CD8-positive, alpha-beta T cell (primary cell): ENCODE measurements at regions of chr11 and their contacts with region 1.

Region 1: DNA sequence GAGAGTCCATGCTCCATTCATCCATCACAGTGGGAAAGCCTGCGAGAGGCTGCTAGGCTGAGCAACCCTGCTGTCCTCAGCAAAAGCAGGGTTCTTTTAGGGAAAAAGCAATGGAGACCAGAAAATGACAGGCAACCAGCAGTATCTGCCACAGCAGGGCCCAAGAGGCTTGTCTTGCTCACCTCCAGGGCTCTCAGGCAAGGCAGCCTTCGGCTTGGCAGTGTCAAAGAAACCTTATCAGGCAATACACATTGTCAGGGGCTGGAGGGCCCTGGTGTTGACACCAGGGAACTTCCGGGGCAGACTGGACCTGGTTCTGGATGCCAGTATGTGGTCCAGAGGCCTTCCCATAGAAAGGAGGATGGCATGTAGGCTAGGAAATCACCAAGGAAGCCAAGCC is 10.2 kb upstream of the TLCD5 start:
- DNase-seq: no peak
- ATAC-seq: no peak
- H3K4me3 ChIP-seq: no peak overlapping the region
- H3K4me3 Mint-ChIP-seq: no peak overlapping the region
- H3K27ac ChIP-seq: no peak overlapping the region
- H3K27ac Mint-ChIP-seq: no peak overlapping the region
- H3K4me1 ChIP-seq: no peaks in the 10 kb centered on the region
- H3K4me1 Mint-ChIP-seq: no peaks in the 10 kb centered on the region
- H3K27me3 ChIP-seq: no peaks in the 10 kb centered on the region
- H3K27me3 Mint-ChIP-seq: peaks cover 15% of the 10 kb centered on the region
- CTCF ChIP-seq: no peak

Region 2: DNA sequence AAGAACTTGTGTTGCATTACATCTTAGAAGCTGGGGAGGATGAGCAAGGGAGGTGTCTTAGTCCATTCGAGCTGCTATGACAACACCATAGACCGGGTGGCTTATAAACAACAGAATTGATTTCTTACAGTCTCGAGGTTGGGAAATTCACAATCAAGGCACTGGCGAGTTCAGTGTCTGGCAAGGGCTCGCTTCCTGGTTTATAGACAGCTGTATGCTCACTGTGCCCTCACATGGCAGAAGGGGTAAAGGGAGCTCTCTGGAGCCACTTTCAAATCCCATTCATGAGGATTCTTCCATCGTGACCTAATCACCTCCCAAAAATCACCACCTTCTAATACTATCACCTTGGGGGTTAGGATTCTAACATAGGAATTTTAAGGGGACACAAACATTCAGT is 435.9 kb before region 1 on chr11:
- CTCF ChIA-PET with region 1: no interaction called
- POLR2A ChIA-PET with region 1: no interaction called
- intact Hi-C with region 1: no loop called
- DNase-seq: no peak
- ATAC-seq: no peak
- H3K4me3 ChIP-seq: no peak overlapping the region
- H3K4me3 Mint-ChIP-seq: no peak overlapping the region
- H3K27ac ChIP-seq: no peak overlapping the region
- H3K27ac Mint-ChIP-seq: no peak overlapping the region
- H3K4me1 ChIP-seq: no peaks in the 10 kb centered on the region
- H3K4me1 Mint-ChIP-seq: no peaks in the 10 kb centered on the region
- H3K27me3 ChIP-seq: no peaks in the 10 kb centered on the region
- H3K27me3 Mint-ChIP-seq: peaks cover 12% of the 10 kb centered on the region
- CTCF ChIP-seq: no peak

Region 3: DNA sequence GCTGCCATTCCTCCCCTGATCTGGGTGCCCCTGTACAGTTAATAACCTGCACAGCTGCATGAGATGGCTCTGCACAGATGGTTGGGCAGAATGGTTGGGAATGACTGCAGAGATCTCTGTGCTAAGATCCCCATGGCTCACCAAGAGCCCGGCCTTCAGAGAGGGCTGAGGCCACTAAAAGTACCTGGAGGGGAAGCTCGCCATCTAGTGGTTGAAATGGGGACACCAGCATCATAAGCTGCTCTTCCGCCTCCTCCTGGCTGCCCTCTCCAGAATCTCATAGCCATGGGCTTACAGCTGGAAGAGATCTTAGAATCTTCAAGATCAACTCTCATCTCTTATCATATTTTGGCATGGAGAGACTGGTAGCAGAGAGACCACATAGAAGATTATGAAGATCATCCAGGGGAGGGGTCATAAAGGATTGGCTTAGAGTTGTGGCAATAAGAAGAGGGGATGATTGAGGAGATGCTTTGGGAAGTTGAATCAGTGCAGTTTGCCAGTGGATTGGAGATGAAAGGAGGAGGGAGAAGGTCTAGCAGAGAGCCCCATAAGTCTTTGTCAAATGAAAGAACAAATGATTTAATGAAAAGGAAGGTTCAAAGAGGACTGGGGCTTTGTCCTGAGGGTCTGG is 11.7 kb before region 1 on chr11:
- CTCF ChIA-PET with region 1: interaction called, 15 read pairs
- POLR2A ChIA-PET with region 1: no interaction called
- intact Hi-C with region 1: no loop called
- DNase-seq: peak; percentile 13 to 74 (median 49)
- ATAC-seq: peak; percentile 68
- H3K4me3 ChIP-seq: no peak overlapping the region
- H3K4me3 Mint-ChIP-seq: no peak overlapping the region
- H3K27ac ChIP-seq: no peak overlapping the region
- H3K27ac Mint-ChIP-seq: no peak overlapping the region
- H3K4me1 ChIP-seq: no peaks in the 10 kb centered on the region
- H3K4me1 Mint-ChIP-seq: no peaks in the 10 kb centered on the region
- H3K27me3 ChIP-seq: peaks cover 0 to 1% of the 10 kb centered on the region in 2 experiments
- H3K27me3 Mint-ChIP-seq: peaks cover 28% of the 10 kb centered on the region
- CTCF ChIP-seq: peak; percentile 89

Region 4: GRCh38 chr11:120354068-120354467 is 39.2 kb after region 1 on chr11:
- CTCF ChIA-PET with region 1: no interaction called
- POLR2A ChIA-PET with region 1: no interaction called
- intact Hi-C with region 1: loop called in 1 of 2 experiments (anchors 1 kb)
- DNase-seq: no peak
- ATAC-seq: no peak
- H3K4me3 ChIP-seq: no peak overlapping the region
- H3K4me3 Mint-ChIP-seq: no peak overlapping the region
- H3K27ac ChIP-seq: no peak overlapping the region
- H3K27ac Mint-ChIP-seq: no peak overlapping the region
- H3K4me1 ChIP-seq: no peaks in the 10 kb centered on the region
- H3K4me1 Mint-ChIP-seq: no peaks in the 10 kb centered on the region
- H3K27me3 ChIP-seq: no peaks in the 10 kb centered on the region
- H3K27me3 Mint-ChIP-seq: peaks cover 50% of the 10 kb centered on the region
- CTCF ChIP-seq: no peak

Region 5: DNA sequence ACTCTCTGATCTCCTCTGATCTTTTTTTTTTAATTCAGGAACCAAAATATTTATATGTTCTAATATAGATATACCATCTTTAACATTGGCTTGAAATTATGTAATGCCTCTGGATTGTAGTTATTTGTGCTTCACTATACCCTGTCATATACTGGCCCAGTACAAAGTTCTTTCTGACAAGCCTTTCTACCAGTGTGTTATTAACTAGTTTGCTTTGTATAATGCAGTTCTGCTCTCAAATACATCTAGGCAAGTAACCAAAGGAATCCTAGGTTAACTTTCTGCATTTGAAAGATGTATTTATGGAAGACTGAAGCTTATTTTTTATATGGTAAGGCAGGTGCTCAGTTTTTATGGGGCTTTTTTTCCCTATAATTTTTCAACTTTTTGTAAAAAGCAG is 57.4 kb after region 1 on chr11:
- CTCF ChIA-PET with region 1: no interaction called
- POLR2A ChIA-PET with region 1: no interaction called
- intact Hi-C with region 1: no loop called
- DNase-seq: no peak
- ATAC-seq: no peak
- H3K4me3 ChIP-seq: no peak overlapping the region
- H3K4me3 Mint-ChIP-seq: no peak overlapping the region
- H3K27ac ChIP-seq: no peak overlapping the region
- H3K27ac Mint-ChIP-seq: no peak overlapping the region
- H3K4me1 ChIP-seq: no peaks in the 10 kb centered on the region
- H3K4me1 Mint-ChIP-seq: no peaks in the 10 kb centered on the region
- H3K27me3 ChIP-seq: peaks cover 0 to 5% of the 10 kb centered on the region in 2 experiments
- H3K27me3 Mint-ChIP-seq: peaks cover 6% of the 10 kb centered on the region
- CTCF ChIP-seq: no peak

Region 6: GRCh38 chr11:120391292-120391691 is 76.4 kb after region 1 on chr11:
- CTCF ChIA-PET with region 1: no interaction called
- POLR2A ChIA-PET with region 1: no interaction called
- intact Hi-C with region 1: no loop called
- DNase-seq: no peak
- ATAC-seq: no peak
- H3K4me3 ChIP-seq: no peak overlapping the region
- H3K4me3 Mint-ChIP-seq: no peak overlapping the region
- H3K27ac ChIP-seq: no peak overlapping the region
- H3K27ac Mint-ChIP-seq: no peak overlapping the region
- H3K4me1 ChIP-seq: no peaks in the 10 kb centered on the region
- H3K4me1 Mint-ChIP-seq: no peaks in the 10 kb centered on the region
- H3K27me3 ChIP-seq: no peaks in the 10 kb centered on the region
- H3K27me3 Mint-ChIP-seq: peaks cover 42% of the 10 kb centered on the region
- CTCF ChIP-seq: no peak

Region 7: GRCh38 chr11:120413480-120413879 is 98.6 kb after region 1 on chr11:
- CTCF ChIA-PET with region 1: no interaction called
- POLR2A ChIA-PET with region 1: no interaction called
- intact Hi-C with region 1: no loop called
- DNase-seq: no peak
- ATAC-seq: no peak
- H3K4me3 ChIP-seq: no peak overlapping the region
- H3K4me3 Mint-ChIP-seq: no peak overlapping the region
- H3K27ac ChIP-seq: no peak overlapping the region
- H3K27ac Mint-ChIP-seq: no peak overlapping the region
- H3K4me1 ChIP-seq: no peaks in the 10 kb centered on the region
- H3K4me1 Mint-ChIP-seq: no peaks in the 10 kb centered on the region
- H3K27me3 ChIP-seq: no peaks in the 10 kb centered on the region
- H3K27me3 Mint-ChIP-seq: peaks cover 5% of the 10 kb centered on the region
- CTCF ChIP-seq: no peak